AG04450 (cell line): ENCODE measurements at regions of chr19 and their contacts with region 1.

Region 1: GRCh38 chr19:45455707-45456499 is 11.9 kb upstream of the FOSB start:
- DNase-seq: peak; percentile 97
- H3K4me3 ChIP-seq: peak overlapping the region; percentile 42
- H3K27ac ChIP-seq: peak overlapping the region; percentile 99
- H3K27me3 ChIP-seq: no peaks in the 10 kb centered on the region
- CTCF ChIP-seq: no peak

Region 2: GRCh38 chr19:45469132-45469944 is 13.4 kb after region 1 on chr19:
- CTCF ChIA-PET with region 1: interaction called, 5 read pairs
- POLR2A ChIA-PET with region 1: interaction called, 32 read pairs
- DNase-seq: peak; percentile 84
- H3K4me3 ChIP-seq: peak overlapping the region; percentile 96
- H3K27ac ChIP-seq: peak overlapping the region; percentile 94
- H3K27me3 ChIP-seq: no peaks in the 10 kb centered on the region
- CTCF ChIP-seq: no peak

Region 3: DNA sequence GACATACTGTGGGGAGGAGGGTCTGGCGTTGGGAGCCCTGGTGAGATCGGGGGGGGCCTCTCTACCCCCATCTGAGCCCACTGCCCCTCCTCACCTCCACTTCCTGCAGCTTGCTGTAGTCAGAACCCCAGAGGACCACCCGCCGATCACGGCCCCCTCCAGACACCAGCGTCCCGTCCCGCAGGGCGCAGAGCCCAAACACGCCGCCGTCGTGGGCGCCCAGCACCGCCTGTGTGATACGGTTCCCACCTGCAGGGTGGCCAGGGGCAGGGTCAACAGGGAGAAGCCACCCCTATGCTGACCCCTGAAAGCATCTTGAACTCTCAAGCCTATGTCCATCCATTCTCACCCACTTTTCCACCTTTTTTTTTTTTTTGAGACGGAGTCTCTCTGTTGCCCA is 165.5 kb after region 1 on chr19:
- CTCF ChIA-PET with region 1: no interaction called
- POLR2A ChIA-PET with region 1: no interaction called
- DNase-seq: no peak
- H3K4me3 ChIP-seq: no peak overlapping the region
- H3K27ac ChIP-seq: no peak overlapping the region
- H3K27me3 ChIP-seq: no peaks in the 10 kb centered on the region
- CTCF ChIP-seq: no peak